ENCODE measurements at regions of chr9 and their contacts with region 1.

Region 1: DNA sequence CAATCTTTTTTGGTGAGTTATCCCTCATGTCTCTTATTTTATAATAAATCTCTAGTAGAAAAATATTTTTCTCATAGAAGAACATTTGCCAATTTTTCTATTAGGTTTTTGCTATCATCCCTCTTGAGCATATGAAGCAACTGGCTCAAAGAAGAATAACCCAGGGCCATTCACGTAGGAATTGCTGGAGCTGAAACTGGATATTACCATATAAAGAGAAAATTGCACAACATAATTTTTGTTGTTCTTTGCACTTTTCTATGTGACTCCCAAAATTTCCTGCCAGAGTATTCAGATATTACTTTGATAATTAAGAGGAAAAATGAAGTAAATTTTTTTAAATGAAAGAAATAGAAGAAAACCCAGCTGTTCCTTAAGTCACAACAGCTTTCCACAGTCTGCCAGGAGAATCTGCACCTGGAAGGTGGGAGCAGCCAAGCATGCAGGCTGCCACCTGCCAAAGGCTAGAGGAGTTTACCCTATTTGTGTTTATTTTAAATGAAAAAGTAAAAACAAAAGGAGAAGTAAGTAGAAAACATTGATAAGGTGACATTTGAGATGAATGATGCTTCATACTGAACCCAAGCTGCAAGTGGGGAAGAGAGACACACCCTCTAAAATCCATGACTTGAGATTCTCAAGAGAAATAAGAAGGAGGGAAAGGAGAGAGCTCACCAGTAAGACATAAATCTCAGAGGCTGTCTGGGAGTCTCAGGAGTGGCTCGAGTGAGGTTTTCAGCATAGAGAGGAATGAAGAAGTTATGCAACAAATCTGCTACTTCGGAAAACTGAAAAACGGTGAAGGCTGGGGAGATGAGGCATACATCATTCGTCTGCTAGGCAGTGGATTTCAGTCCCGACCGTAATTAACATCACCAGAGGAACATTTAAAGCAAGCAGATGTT is 31.5 kb upstream of the FREM1 start:
- DNase-seq: no peak
- H3K4me3 Mint-ChIP-seq: no peak overlapping the region
- H3K27ac Mint-ChIP-seq: no peak overlapping the region
- H3K4me1 Mint-ChIP-seq: no peaks in the 10 kb centered on the region
- H3K27me3 Mint-ChIP-seq: peaks cover 17% of the 10 kb centered on the region

Region 2: DNA sequence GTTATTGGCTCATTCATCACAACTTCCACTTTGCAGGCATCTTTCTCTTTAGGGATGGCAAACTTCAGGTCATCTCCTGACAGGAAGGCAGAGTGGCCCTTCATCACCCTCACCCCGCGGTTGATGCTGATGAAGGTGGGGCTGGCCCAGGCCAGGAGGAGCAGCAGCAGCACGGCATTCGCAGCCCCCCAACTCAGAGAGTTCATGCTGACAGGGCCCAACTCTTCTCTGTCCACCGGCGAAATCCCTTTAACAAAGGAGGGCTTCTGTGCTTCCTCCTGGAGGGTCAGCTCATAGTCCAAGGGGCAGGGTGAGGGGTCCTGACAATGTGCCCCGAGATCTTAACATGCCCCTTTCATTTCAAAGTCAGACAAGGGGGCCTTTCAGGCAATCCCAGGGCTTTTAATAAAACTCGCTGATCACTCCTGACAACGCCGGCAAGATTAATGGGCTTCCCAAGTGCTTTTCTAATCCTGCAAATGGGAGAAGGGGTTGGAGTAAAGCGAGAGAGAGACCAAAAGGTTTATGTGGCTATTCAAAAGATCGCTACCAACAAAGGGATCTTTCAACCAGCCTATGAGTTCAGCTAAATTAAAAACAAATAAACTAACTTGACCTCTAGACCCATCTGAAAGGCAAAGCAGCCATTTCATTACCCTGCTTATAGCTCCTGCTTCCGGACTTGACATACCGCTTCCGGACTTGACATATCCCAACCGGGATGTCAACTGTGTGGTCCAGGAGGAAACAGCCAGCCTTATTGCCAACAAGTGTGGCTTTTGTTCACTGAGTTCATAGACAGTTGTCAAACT is 72.8 kb before region 1 on chr9:
- intact Hi-C with region 1: loop called (anchors 10 kb)
- DNase-seq: no peak
- H3K4me3 Mint-ChIP-seq: no peak overlapping the region
- H3K27ac Mint-ChIP-seq: no peak overlapping the region
- H3K4me1 Mint-ChIP-seq: no peaks in the 10 kb centered on the region
- H3K27me3 Mint-ChIP-seq: peaks cover 5% of the 10 kb centered on the region

Measured in activated T-helper 1 cell treated with anti-CD3 and anti-CD28 coated beads, Interleukin-12 subunit alpha, Interleukin-12 subunit beta, Interleukin-2, Interleukin-4 antibody, amounts not matched to agents 30 ng/mL and 10 ng/mL and 1 ng/mL, durations not matched to agents 14 hours and 24 hours and 36 hours (primary cell).